ENCODE measurements at regions of chr11 and their contacts with region 1.

Region 1: GRCh38 chr11:69296890-69297786 is 3.2 kb downstream of the MYEOV start:
- DNase-seq: peak; percentile 95
- H3K4me3 ChIP-seq: no peak overlapping the region; the same call in 1 of the 2 replicates
- CTCF ChIP-seq: no peak

Region 2: GRCh38 chr11:69121006-69121405 is 176.1 kb before region 1 on chr11:
- CTCF ChIA-PET with region 1: no interaction called
- POLR2A ChIA-PET with region 1: no interaction called
- DNase-seq: no peak
- H3K4me3 ChIP-seq: no peak overlapping the region
- CTCF ChIP-seq: no peak

Region 3: GRCh38 chr11:69131644-69132300 is 165.4 kb before region 1 on chr11:
- CTCF ChIA-PET with region 1: interaction called, 10 read pairs
- POLR2A ChIA-PET with region 1: no interaction called
- DNase-seq: peak; percentile 17
- H3K4me3 ChIP-seq: no peak overlapping the region
- CTCF ChIP-seq: peak; percentile 88

Region 4: GRCh38 chr11:69280994-69281393 is 16.1 kb before region 1 on chr11:
- CTCF ChIA-PET with region 1: interaction called, 25 read pairs
- POLR2A ChIA-PET with region 1: interaction called, 3 read pairs
- DNase-seq: peak; percentile 66
- H3K4me3 ChIP-seq: no peak overlapping the region
- CTCF ChIP-seq: no peak

Region 5: GRCh38 chr11:69352715-69353325 is 55.7 kb after region 1 on chr11:
- CTCF ChIA-PET with region 1: interaction called, 3 read pairs
- POLR2A ChIA-PET with region 1: interaction called, 15 read pairs
- DNase-seq: peak; percentile 76
- H3K4me3 ChIP-seq: no peak overlapping the region
- CTCF ChIP-seq: no peak

Region 6: GRCh38 chr11:69642913-69643632 is 345.9 kb after region 1 on chr11:
- CTCF ChIA-PET with region 1: interaction called, 39 read pairs
- POLR2A ChIA-PET with region 1: interaction called, 98 read pairs
- DNase-seq: no peak
- H3K4me3 ChIP-seq: peak overlapping the region; percentile 99
- CTCF ChIP-seq: peak; percentile 89

Measured in AG04449 (cell line).